A549 (cell line): ENCODE measurements at regions of chr22 and their contacts with region 1.

Region 1: DNA sequence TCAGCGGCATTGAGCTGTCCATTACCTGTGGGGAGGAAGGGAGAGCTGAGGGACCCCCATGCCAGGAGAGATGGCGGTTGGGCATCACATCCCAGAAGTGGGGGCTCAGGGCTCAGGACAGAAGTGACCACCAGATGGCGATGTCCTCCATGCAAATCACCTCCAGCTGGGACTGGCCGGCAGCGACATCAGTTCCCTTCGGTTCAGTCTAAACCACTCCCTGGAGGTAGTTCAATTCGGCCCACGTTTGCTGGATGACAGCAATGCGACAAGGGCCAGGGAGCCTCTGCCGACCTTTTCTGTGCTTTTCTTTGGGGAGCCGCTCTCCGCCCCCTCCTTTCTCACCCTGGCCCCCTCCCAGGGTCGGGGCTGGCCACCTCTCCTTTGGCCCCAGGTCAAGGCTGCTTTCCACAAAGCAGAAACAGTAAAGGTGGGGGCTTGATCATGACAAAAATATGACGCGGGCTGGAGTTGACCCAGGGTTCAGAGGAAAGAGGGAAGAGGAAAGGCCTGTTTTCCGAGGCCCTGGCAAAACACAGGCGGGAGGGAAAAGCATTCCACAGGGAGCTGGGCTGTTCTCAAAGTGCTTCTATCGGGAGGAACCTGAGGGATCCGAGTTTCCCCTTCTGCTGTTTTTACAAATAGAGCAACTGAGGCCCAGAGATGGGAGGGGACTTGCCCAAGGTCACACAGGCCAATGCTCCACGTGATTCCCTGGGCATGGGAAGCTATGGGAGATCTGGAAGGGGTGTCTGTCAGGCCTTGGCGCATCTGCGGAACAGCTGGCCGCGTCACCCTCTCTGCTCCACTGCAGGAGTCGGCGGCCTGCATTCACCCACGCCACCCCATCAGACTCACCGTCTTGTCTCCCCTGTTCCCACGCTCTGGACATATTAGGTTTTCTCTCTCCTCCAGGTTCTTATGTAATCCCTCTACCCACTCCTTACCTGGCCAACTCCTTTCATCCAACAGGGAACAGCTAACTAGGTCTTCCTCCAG is 54.7 kb downstream of the FBXO7 start:
- DNase-seq: peak; percentile 74 to 79
- ATAC-seq: peak; percentile 95 to 98
- H3K4me3 ChIP-seq: no peak overlapping the region
- H3K27ac ChIP-seq: peak overlapping the region; percentile 61 to 66; a peak in 3 of 6 replicates
- H3K4me1 ChIP-seq: peaks cover 12% of the 10 kb centered on the region
- CTCF ChIP-seq: peak; percentile 69
- EP300 ChIP-seq: no peak
- POLR2A ChIP-seq: no peak
- RAD21 ChIP-seq: peak; percentile 91 to 93

Region 2: DNA sequence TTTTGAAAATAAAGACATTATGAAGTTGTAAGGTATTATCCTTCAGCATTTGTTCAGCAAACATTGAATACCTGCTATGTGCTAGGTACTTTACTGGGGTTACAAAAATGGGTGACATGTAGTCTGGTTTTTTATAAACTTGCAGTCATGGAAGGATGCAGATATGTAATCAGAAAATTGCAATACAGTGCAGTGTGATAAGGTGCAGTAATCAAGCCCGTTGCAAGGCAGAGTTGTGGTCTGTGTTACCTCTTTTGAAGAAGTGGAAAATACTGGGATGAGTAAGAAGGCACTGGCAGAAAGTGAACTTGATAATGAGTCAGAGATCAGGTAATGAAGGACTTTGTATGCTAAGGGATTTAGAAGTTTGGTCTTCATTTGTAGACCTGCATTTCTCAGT is 46.6 kb before region 1 on chr22:
- CTCF ChIA-PET with region 1: no interaction called
- POLR2A ChIA-PET with region 1: no interaction called
- DNase-seq: no peak
- ATAC-seq: no peak
- H3K4me3 ChIP-seq: no peak overlapping the region
- H3K27ac ChIP-seq: no peak overlapping the region
- H3K4me1 ChIP-seq: 0 out of 3 replicates have a peak, but pooled peaks cover 4% of the 10 kb centered on the region
- CTCF ChIP-seq: no peak
- EP300 ChIP-seq: no peak
- POLR2A ChIP-seq: no peak
- RAD21 ChIP-seq: no peak

Region 3: GRCh38 chr22:32552521-32552920 is 23.2 kb after region 1 on chr22:
- CTCF ChIA-PET with region 1: no interaction called
- POLR2A ChIA-PET with region 1: no interaction called
- DNase-seq: no peak
- ATAC-seq: no peak
- H3K4me3 ChIP-seq: no peak overlapping the region
- H3K27ac ChIP-seq: no peak overlapping the region
- H3K4me1 ChIP-seq: peaks cover 9% of the 10 kb centered on the region
- CTCF ChIP-seq: no peak
- EP300 ChIP-seq: no peak
- POLR2A ChIP-seq: no peak
- RAD21 ChIP-seq: no peak

Region 4: GRCh38 chr22:32574408-32574807 is 45.1 kb after region 1 on chr22:
- CTCF ChIA-PET with region 1: no interaction called
- POLR2A ChIA-PET with region 1: no interaction called
- DNase-seq: no peak
- ATAC-seq: no peak
- H3K4me3 ChIP-seq: no peak overlapping the region
- H3K27ac ChIP-seq: no peak overlapping the region
- H3K4me1 ChIP-seq: no peaks in the 10 kb centered on the region
- CTCF ChIP-seq: no peak
- EP300 ChIP-seq: no peak
- POLR2A ChIP-seq: no peak
- RAD21 ChIP-seq: no peak

Region 5: GRCh38 chr22:32660292-32660691 is 131.0 kb after region 1 on chr22:
- CTCF ChIA-PET with region 1: interaction called, 10 read pairs
- POLR2A ChIA-PET with region 1: no interaction called
- DNase-seq: peak; percentile 47 to 49
- ATAC-seq: peak; percentile 71 to 77; a peak in 4 of 6 replicates
- H3K4me3 ChIP-seq: no peak overlapping the region
- H3K27ac ChIP-seq: no peak overlapping the region
- H3K4me1 ChIP-seq: no peaks in the 10 kb centered on the region
- CTCF ChIP-seq: peak; percentile 49
- EP300 ChIP-seq: no peak
- POLR2A ChIP-seq: no peak
- RAD21 ChIP-seq: peak; percentile 64 to 73

Region 6: DNA sequence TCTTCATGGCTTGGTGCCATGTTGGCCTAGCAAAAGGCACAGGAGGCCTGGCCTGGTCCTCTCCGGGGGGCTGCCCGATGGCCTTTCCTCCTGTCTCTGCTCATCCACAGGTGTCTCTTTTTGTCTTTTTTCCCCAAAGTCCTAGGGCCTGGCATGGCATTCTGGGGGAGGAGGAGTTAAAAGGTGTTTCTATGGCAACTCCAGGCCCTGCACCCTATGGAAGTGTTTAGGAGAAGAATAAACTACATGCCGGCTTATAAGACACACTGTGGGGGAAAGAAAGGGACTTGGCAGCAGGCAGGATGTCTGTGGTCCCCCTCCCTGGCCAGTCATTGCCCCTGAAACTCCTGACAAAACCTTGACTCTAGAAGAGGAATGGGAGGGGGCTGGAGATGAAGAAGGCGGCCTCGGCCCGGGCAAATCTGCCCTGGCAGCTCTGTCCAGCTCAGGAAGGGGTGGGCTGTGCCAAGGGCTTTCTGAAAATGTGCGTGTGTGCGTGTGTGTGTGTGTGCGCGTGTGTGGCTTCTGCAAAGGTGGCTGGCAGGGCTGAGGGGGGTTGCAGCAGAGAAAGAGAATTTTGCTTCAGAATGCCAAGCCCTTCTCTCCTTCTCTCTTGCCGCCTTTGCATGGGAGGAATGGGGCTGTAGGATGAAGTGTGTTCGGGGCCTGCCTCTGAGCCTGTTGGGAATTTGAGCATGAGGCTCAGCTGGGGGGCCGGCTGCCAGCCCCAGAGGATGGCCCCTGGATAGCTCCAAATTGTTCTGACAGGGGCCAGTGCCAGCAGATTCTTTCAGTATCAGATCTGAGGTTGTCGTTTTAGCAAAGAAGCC is 275.5 kb after region 1 on chr22:
- CTCF ChIA-PET with region 1: interaction called, 187 read pairs
- POLR2A ChIA-PET with region 1: no interaction called
- DNase-seq: no peak
- ATAC-seq: no peak
- H3K4me3 ChIP-seq: no peak overlapping the region
- H3K27ac ChIP-seq: no peak overlapping the region
- H3K4me1 ChIP-seq: no peaks in the 10 kb centered on the region
- CTCF ChIP-seq: no peak
- EP300 ChIP-seq: no peak
- POLR2A ChIP-seq: no peak
- RAD21 ChIP-seq: no peak

Region 7: GRCh38 chr22:32985899-32986765 is 456.8 kb after region 1 on chr22:
- CTCF ChIA-PET with region 1: interaction called, 19 read pairs
- POLR2A ChIA-PET with region 1: no interaction called
- DNase-seq: peak; percentile 40 to 61
- ATAC-seq: peak; percentile 93 to 96
- H3K4me3 ChIP-seq: no peak overlapping the region
- H3K27ac ChIP-seq: no peak overlapping the region
- H3K4me1 ChIP-seq: no peaks in the 10 kb centered on the region
- CTCF ChIP-seq: peak; percentile 55
- EP300 ChIP-seq: no peak
- POLR2A ChIP-seq: no peak
- RAD21 ChIP-seq: peak; percentile 60 to 65